Activated naive CD4-positive, alpha-beta T cell treated with anti-CD3 and anti-CD28 coated beads for 36 hours (primary cell): ENCODE measurements at regions of chr19 and their contacts with region 1.

Region 1: GRCh38 chr19:18846862-18847548 is 15.2 kb downstream of the UPF1 start:
- DNase-seq: peak; percentile 79
- H3K4me3 Mint-ChIP-seq: no peak overlapping the region
- H3K27ac Mint-ChIP-seq: no peak overlapping the region
- H3K4me1 Mint-ChIP-seq: peaks cover 46% of the 10 kb centered on the region
- H3K27me3 Mint-ChIP-seq: no peaks in the 10 kb centered on the region

Region 2: DNA sequence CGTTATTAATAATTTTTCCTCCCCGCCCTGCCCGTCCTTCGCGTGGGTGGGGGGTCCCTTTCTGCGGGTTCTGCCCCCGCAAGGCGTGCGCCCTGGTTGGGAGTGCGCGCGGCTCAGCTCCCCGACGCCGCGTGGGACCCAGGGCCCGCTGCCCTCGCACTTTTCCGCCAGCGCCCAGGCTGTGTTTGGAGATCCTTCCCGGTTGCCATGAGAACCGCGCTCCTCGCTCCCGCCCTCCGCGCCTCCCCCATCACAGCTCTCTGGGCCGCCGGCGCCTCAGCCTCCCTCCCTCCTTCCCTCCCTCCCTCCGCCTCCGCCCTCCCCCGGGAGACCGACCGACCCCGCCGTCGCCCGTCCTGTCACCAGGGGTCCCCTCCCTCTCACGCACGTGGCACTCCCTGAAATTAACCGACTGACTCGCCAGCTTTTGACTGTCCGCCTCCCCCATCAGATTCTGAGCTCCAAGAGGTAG is 430.2 kb before region 1 on chr19:
- CTCF ChIA-PET with region 1: no interaction called
- intact Hi-C with region 1: no loop called
- DNase-seq: peak; percentile 68
- H3K4me3 Mint-ChIP-seq: peak overlapping the region; percentile 70
- H3K27ac Mint-ChIP-seq: no peak overlapping the region
- H3K4me1 Mint-ChIP-seq: peaks cover 58% of the 10 kb centered on the region
- H3K27me3 Mint-ChIP-seq: peaks cover 40% of the 10 kb centered on the region

Region 3: GRCh38 chr19:18594096-18594823 is 252.7 kb before region 1 on chr19:
- CTCF ChIA-PET with region 1: interaction called, 10 read pairs
- intact Hi-C with region 1: loop called (anchors 1 kb)
- DNase-seq: peak; percentile 75
- H3K4me3 Mint-ChIP-seq: peak overlapping the region; percentile 61
- H3K27ac Mint-ChIP-seq: no peak overlapping the region
- H3K4me1 Mint-ChIP-seq: peaks cover 21% of the 10 kb centered on the region
- H3K27me3 Mint-ChIP-seq: peaks cover 2% of the 10 kb centered on the region